SK-N-SH (cell line): ENCODE measurements at regions of chr3 and their contacts with region 1.

Region 1: GRCh38 chr3:157201648-157202278 is 41.8 kb upstream of the CCNL1 start:
- DNase-seq: peak; percentile 36
- H3K4me3 ChIP-seq: no peak overlapping the region; a peak in 1 of 4 replicates
- H3K27ac ChIP-seq: no peak overlapping the region
- H3K4me1 ChIP-seq: peaks cover 6 to 13% of the 10 kb centered on the region in 2 experiments; a peak in 3 of 4 replicates
- H3K27me3 ChIP-seq: no peaks in the 10 kb centered on the region
- CTCF ChIP-seq: peak; percentile 67
- EP300 ChIP-seq: no peak
- RAD21 ChIP-seq: peak; percentile 65

Region 2: DNA sequence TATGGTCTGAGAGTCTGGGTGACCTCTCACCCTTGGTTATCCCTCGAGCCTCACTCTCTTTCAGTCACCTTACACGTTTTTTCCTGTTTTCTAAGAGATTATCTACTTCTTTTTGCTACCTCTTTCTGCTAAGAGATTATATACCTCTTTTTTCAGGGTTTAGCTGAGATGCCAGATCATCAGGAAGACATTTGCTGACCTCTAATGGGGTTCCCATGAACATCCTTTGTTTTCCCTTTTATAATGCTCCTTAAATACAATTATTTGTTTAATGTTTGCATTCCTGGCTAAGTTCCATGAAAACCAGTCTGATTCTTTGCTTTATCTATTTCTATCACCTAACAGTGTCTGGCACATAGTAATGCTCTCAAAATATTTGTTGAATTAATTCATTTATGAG is 336.0 kb before region 1 on chr3:
- CTCF ChIA-PET with region 1: no interaction called
- POLR2A ChIA-PET with region 1: no interaction called
- DNase-seq: no peak
- H3K4me3 ChIP-seq: no peak overlapping the region
- H3K27ac ChIP-seq: no peak overlapping the region
- H3K4me1 ChIP-seq: no peaks in the 10 kb centered on the region; a peak in 2 of 4 replicates
- H3K27me3 ChIP-seq: no peaks in the 10 kb centered on the region
- CTCF ChIP-seq: peak; percentile 34
- EP300 ChIP-seq: no peak
- RAD21 ChIP-seq: peak; percentile 52

Region 3: GRCh38 chr3:157174649-157175498 is 26.9 kb before region 1 on chr3:
- CTCF ChIA-PET with region 1: interaction called, 19 read pairs
- POLR2A ChIA-PET with region 1: no interaction called
- DNase-seq: peak; percentile 92
- H3K4me3 ChIP-seq: peak overlapping the region; percentile 73 to 74
- H3K27ac ChIP-seq: peak overlapping the region; percentile 98 to 99
- H3K4me1 ChIP-seq: peaks cover 0 to 10% of the 10 kb centered on the region in 2 experiments; a peak in 2 of 4 replicates
- H3K27me3 ChIP-seq: no peaks in the 10 kb centered on the region
- CTCF ChIP-seq: no peak
- EP300 ChIP-seq: peak; percentile 56 to 64; a peak in 2 of 4 replicates
- RAD21 ChIP-seq: peak; percentile 8; the same call in 1 of the 2 replicates

Region 4: DNA sequence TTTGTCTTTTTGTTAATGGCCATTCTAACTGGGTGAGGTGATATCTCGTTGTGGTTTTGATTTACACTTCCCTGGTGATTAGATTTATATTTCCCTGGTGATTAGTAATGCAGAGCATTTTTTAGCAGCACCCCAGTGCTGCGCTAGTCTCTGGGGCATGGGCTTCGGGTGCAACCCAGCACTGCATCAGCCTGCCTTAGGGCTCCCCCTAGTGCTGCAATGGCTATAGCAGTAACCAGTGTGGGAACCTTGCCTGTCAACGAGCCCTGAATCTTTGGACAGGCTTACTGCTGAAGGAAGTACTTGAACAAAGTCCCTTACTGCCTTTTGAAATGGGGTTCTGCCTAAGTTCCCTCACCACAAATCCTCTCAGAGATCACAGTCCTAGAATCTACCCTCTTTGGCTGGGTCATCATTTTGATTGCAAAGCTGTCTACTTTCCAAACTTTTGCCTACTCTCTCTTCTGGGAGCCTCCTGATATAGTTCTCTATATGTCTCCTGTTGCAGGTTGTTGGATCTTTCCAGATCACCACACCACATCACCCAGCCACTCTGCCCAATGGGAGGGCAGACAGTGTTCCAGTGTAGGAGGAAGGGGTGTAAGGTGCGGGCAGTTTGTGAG is 37.4 kb after region 1 on chr3:
- CTCF ChIA-PET with region 1: interaction called, 23 read pairs
- POLR2A ChIA-PET with region 1: no interaction called
- DNase-seq: peak; percentile 52
- H3K4me3 ChIP-seq: no peak overlapping the region; a peak in 1 of 4 replicates
- H3K27ac ChIP-seq: peak overlapping the region in 1 of 2 experiments; percentile 9; a peak in 1 of 4 replicates
- H3K4me1 ChIP-seq: peaks cover 7 to 8% of the 10 kb centered on the region in 2 experiments; a peak in 3 of 4 replicates
- H3K27me3 ChIP-seq: no peaks in the 10 kb centered on the region
- CTCF ChIP-seq: peak; percentile 68
- EP300 ChIP-seq: no peak
- RAD21 ChIP-seq: peak; percentile 86

Region 5: GRCh38 chr3:157493627-157494550 is 292.1 kb after region 1 on chr3:
- CTCF ChIA-PET with region 1: interaction called, 142 read pairs
- POLR2A ChIA-PET with region 1: no interaction called
- DNase-seq: peak; percentile 12
- H3K4me3 ChIP-seq: no peak overlapping the region
- H3K27ac ChIP-seq: peak overlapping the region in 1 of 2 experiments; percentile 63; a peak in 3 of 4 replicates
- H3K4me1 ChIP-seq: peaks cover 4 to 21% of the 10 kb centered on the region in 2 experiments
- H3K27me3 ChIP-seq: no peaks in the 10 kb centered on the region
- CTCF ChIP-seq: peak; percentile 78
- EP300 ChIP-seq: no peak
- RAD21 ChIP-seq: peak; percentile 83

Region 6: DNA sequence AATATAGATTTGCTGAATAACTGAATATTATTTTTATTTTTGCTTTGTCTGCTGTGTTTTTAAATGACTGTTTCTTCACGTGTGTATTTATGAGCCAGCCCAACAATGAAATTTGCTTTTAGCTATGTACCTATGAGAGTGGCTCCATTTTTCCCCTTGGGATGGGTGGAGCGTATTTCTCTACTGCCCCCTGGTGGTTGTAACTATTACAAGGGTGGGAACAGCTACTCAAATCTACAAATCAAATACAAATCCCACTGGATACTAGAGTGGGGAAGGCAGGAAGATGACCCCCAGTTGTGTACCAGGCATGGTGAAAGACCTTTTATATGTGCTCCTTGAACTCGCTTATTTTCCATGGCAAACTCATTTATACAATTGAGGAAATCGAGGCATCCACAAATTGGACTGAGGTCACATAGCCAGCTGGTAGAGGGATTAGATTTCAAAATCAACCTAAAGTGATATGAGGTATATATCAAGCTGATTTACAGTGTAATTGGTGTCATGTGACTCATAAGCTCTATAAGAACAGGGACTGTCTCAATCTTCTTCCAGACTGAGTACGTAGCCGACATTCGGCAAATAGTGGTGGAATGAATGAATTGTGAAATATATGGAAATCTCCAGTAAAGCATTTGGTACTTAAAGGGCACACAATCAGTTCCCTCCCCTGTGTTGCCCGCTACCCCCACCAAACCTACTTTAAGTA is 371.0 kb after region 1 on chr3:
- CTCF ChIA-PET with region 1: interaction called, 12 read pairs
- POLR2A ChIA-PET with region 1: no interaction called
- DNase-seq: peak; percentile 55
- H3K4me3 ChIP-seq: no peak overlapping the region; a peak in 1 of 4 replicates
- H3K27ac ChIP-seq: no peak overlapping the region
- H3K4me1 ChIP-seq: no peaks in the 10 kb centered on the region; a peak in 1 of 4 replicates
- H3K27me3 ChIP-seq: no peaks in the 10 kb centered on the region
- CTCF ChIP-seq: peak; percentile 80
- EP300 ChIP-seq: no peak
- RAD21 ChIP-seq: peak; percentile 70